Spleen (tissue), 13 donors: ENCODE measurements at regions of chr3 and their contacts with region 1.

Region 1: GRCh38 chr3:13440204-13440817 is 20.2 kb upstream of the NUP210 start:
- DNase-seq: no peak
- H3K4me3 ChIP-seq: no peak overlapping the region
- H3K27ac ChIP-seq: no peak overlapping the region
- H3K4me1 ChIP-seq: no peaks in the 10 kb centered on the region
- H3K27me3 ChIP-seq: peaks cover 0 to 4% (median 0%) of the 10 kb centered on the region in 7 donors
- CTCF ChIP-seq: no peak
- POLR2A ChIP-seq: no peak

Region 2: DNA sequence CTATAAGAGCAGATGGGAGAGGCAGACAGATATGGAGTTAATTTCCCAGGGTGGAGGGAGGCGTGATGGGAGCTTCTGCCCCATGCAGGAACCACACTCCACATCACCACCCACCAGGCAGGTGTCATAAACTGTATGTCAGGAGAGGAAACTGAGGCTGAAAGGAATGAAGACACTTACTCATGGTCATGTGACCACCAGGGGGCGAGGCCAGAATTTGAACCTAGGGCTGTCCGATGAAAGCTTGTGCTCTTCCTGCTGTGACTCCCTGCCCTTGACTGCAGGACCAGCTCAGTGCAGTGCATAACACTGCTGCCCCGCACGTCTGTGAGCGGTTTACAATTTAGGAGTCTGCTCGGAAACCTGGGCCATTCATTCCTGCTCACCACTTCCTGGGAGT is 49.0 kb before region 1 on chr3:
- intact Hi-C with region 1: loop called (anchors 10 kb)
- DNase-seq: no peak
- H3K4me3 ChIP-seq: no peak overlapping the region
- H3K27ac ChIP-seq: no peak overlapping the region
- H3K4me1 ChIP-seq: peaks cover 0 to 6% (median 0%) of the 10 kb centered on the region in 6 donors
- H3K27me3 ChIP-seq: no peaks in the 10 kb centered on the region
- CTCF ChIP-seq: peak in 5 of 11 experiments; percentile 18 to 49 (median 25)
- POLR2A ChIP-seq: no peak